ENCODE measurements at regions of chr1 and their contacts with region 1.

Region 1: GRCh38 chr1:147389532-147390524 is 147.3 kb downstream of the CHD1L start:
- DNase-seq: peak in 3 of 14 experiments; percentile 26 to 48 (median 48)
- ATAC-seq: peak; percentile 43
- H3K4me3 ChIP-seq: no peak overlapping the region
- H3K4me3 Mint-ChIP-seq: no peak overlapping the region
- H3K27ac ChIP-seq: no peak overlapping the region
- H3K27ac Mint-ChIP-seq: no peak overlapping the region
- H3K4me1 ChIP-seq: no peaks in the 10 kb centered on the region
- H3K4me1 Mint-ChIP-seq: no peaks in the 10 kb centered on the region
- H3K27me3 ChIP-seq: peaks cover 0 to 14% of the 10 kb centered on the region in 2 experiments
- H3K27me3 Mint-ChIP-seq: peaks cover 23% of the 10 kb centered on the region
- CTCF ChIP-seq: peak; percentile 68

Region 2: GRCh38 chr1:147273409-147274336 is 116.2 kb before region 1 on chr1:
- CTCF ChIA-PET with region 1: interaction called, 7 read pairs
- POLR2A ChIA-PET with region 1: no interaction called
- intact Hi-C with region 1: loop called in 1 of 2 experiments (anchors 1 kb)
- DNase-seq: peak in 6 of 14 experiments; percentile 0 to 71 (median 46)
- ATAC-seq: peak; percentile 68
- H3K4me3 ChIP-seq: no peak overlapping the region
- H3K4me3 Mint-ChIP-seq: no peak overlapping the region
- H3K27ac ChIP-seq: no peak overlapping the region
- H3K27ac Mint-ChIP-seq: no peak overlapping the region
- H3K4me1 ChIP-seq: no peaks in the 10 kb centered on the region
- H3K4me1 Mint-ChIP-seq: no peaks in the 10 kb centered on the region
- H3K27me3 ChIP-seq: no peaks in the 10 kb centered on the region
- H3K27me3 Mint-ChIP-seq: no peaks in the 10 kb centered on the region
- CTCF ChIP-seq: peak; percentile 76

Region 3: GRCh38 chr1:147560756-147561471 is 171.1 kb after region 1 on chr1:
- CTCF ChIA-PET with region 1: no interaction called
- POLR2A ChIA-PET with region 1: no interaction called
- intact Hi-C with region 1: no loop called
- DNase-seq: no peak
- ATAC-seq: no peak
- H3K4me3 ChIP-seq: no peak overlapping the region
- H3K4me3 Mint-ChIP-seq: no peak overlapping the region
- H3K27ac ChIP-seq: no peak overlapping the region
- H3K27ac Mint-ChIP-seq: no peak overlapping the region
- H3K4me1 ChIP-seq: no peaks in the 10 kb centered on the region
- H3K4me1 Mint-ChIP-seq: peaks cover 23% of the 10 kb centered on the region
- H3K27me3 ChIP-seq: no peaks in the 10 kb centered on the region
- H3K27me3 Mint-ChIP-seq: no peaks in the 10 kb centered on the region
- CTCF ChIP-seq: no peak

Region 4: GRCh38 chr1:147640553-147641165 is 250.8 kb after region 1 on chr1:
- CTCF ChIA-PET with region 1: no interaction called
- POLR2A ChIA-PET with region 1: no interaction called
- intact Hi-C with region 1: no loop called
- DNase-seq: peak; percentile 57 to 92 (median 68)
- ATAC-seq: peak; percentile 100
- H3K4me3 ChIP-seq: no peak overlapping the region
- H3K4me3 Mint-ChIP-seq: no peak overlapping the region
- H3K27ac ChIP-seq: no peak overlapping the region
- H3K27ac Mint-ChIP-seq: peak overlapping the region; percentile 31
- H3K4me1 ChIP-seq: peaks cover 20% of the 10 kb centered on the region
- H3K4me1 Mint-ChIP-seq: peaks cover 29% of the 10 kb centered on the region
- H3K27me3 ChIP-seq: no peaks in the 10 kb centered on the region
- H3K27me3 Mint-ChIP-seq: no peaks in the 10 kb centered on the region
- CTCF ChIP-seq: peak; percentile 79

Measured in CD4-positive, alpha-beta T cell (primary cell).